PC-9 (cell line): ENCODE measurements at regions of chr20 and their contacts with region 1.

Region 1: GRCh38 chr20:46307139-46307998 is 929 bp downstream of the CDH22 start:
- DNase-seq: peak; percentile 43 to 55
- H3K4me3 ChIP-seq: no peak overlapping the region
- H3K27ac ChIP-seq: no peak overlapping the region
- H3K4me1 ChIP-seq: no peaks in the 10 kb centered on the region
- H3K27me3 ChIP-seq: peaks cover 85% of the 10 kb centered on the region
- CTCF ChIP-seq: peak; percentile 88

Region 2: DNA sequence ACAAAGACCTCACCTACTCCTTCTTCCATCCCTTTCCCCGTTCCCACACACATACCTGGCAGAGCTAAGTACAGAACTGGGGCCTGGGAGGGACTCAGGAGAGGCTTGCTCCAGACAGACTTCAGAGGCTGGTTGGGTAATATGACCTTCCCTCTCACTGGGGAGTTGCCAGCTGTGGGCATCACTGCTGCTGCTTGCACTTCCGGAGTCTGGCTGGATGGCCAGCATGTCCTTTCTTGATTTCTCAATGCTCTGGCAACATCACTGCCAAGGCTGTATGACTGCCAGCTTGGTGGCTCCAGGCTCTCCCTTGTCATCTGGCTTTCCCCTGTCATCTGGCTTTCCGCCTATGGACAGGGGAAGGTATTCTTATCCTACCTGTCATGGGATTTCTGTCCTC is 46.9 kb before region 1 on chr20:
- CTCF ChIA-PET with region 1: no interaction called
- POLR2A ChIA-PET with region 1: no interaction called
- intact Hi-C with region 1: no loop called
- DNase-seq: no peak
- H3K4me3 ChIP-seq: no peak overlapping the region
- H3K27ac ChIP-seq: no peak overlapping the region
- H3K4me1 ChIP-seq: no peaks in the 10 kb centered on the region
- H3K27me3 ChIP-seq: peaks cover 95% of the 10 kb centered on the region
- CTCF ChIP-seq: no peak

Region 3: GRCh38 chr20:46282669-46283068 is 24.7 kb before region 1 on chr20:
- CTCF ChIA-PET with region 1: no interaction called
- POLR2A ChIA-PET with region 1: no interaction called
- intact Hi-C with region 1: no loop called
- DNase-seq: no peak
- H3K4me3 ChIP-seq: no peak overlapping the region
- H3K27ac ChIP-seq: no peak overlapping the region
- H3K4me1 ChIP-seq: no peaks in the 10 kb centered on the region
- H3K27me3 ChIP-seq: peaks cover 97% of the 10 kb centered on the region
- CTCF ChIP-seq: no peak

Region 4: GRCh38 chr20:46378412-46379009 is 71.1 kb after region 1 on chr20:
- CTCF ChIA-PET with region 1: no interaction called
- POLR2A ChIA-PET with region 1: no interaction called
- intact Hi-C with region 1: no loop called
- DNase-seq: peak in 1 of 2 experiments; percentile 15
- H3K4me3 ChIP-seq: no peak overlapping the region
- H3K27ac ChIP-seq: no peak overlapping the region
- H3K4me1 ChIP-seq: no peaks in the 10 kb centered on the region
- H3K27me3 ChIP-seq: no peaks in the 10 kb centered on the region
- CTCF ChIP-seq: no peak

Region 5: DNA sequence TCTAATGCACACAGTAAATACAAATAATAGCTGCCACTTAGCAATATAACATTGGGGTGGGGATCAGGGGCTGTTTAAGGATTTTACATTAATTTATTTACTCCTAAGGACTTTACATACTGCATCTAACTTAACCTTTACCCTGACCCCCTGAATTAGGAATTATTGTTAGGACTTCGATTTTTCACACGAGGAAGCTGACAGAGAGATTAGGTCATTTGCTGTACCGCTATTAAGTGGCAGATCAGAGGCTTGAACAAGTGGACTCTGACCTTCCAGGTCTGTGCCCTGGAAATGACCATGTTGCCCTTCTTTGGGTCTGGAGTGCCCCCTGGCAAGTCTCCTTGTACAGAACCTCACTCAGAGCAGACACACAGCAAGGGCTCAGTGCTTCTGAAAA is 104.3 kb after region 1 on chr20:
- CTCF ChIA-PET with region 1: interaction called, 3 read pairs
- POLR2A ChIA-PET with region 1: no interaction called
- intact Hi-C with region 1: loop called (anchors 1 kb)
- DNase-seq: no peak
- H3K4me3 ChIP-seq: no peak overlapping the region
- H3K27ac ChIP-seq: no peak overlapping the region
- H3K4me1 ChIP-seq: peaks cover 19% of the 10 kb centered on the region
- H3K27me3 ChIP-seq: peaks cover 48% of the 10 kb centered on the region
- CTCF ChIP-seq: no peak

Region 6: DNA sequence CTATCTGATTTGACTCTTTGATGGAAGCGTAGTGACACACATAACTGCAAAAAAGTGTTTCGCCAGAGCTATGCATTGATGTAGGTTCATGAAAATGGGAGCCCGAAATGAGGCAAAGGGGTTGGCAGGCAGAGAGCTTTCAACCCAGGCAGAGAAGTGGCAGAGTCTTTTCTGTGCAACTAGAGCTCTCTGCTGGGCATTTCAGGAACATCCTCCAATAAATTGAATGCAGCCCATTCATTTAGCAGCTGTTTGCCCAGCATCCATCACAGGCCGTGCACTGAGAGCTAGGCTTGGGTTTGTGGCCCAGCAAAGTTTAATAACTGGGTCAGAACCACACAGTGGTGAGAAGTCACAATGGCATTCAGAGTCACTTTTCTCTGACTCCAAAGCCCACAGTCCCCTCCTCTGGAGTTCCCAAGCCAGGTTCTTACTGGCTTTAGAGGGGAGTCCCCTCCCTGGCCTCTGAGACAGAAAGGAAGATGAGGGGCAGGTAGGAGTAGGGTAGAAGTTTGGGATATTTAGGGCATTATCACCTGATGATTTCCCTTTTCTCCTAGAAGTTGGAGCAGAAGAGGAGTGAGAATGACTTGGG is 130.9 kb after region 1 on chr20:
- CTCF ChIA-PET with region 1: no interaction called
- POLR2A ChIA-PET with region 1: no interaction called
- intact Hi-C with region 1: loop called (anchors 1 kb)
- DNase-seq: peak; percentile 29 to 53
- H3K4me3 ChIP-seq: no peak overlapping the region
- H3K27ac ChIP-seq: no peak overlapping the region
- H3K4me1 ChIP-seq: no peaks in the 10 kb centered on the region
- H3K27me3 ChIP-seq: peaks cover 88% of the 10 kb centered on the region
- CTCF ChIP-seq: peak; percentile 62